ENCODE measurements at regions of chr4 and their contacts with region 1.

Region 1: GRCh38 chr4:163544407-163545038 is 50.0 kb downstream of the TMA16 start:
- DNase-seq: no peak
- ATAC-seq: peak; percentile 95
- H3K4me3 ChIP-seq: no peak overlapping the region
- H3K27ac ChIP-seq: no peak overlapping the region
- H3K4me1 ChIP-seq: no peaks in the 10 kb centered on the region
- H3K27me3 ChIP-seq: no peaks in the 10 kb centered on the region
- CTCF ChIP-seq: peak; percentile 92 to 93 (median 92)
- EP300 ChIP-seq: no peak
- POLR2A ChIP-seq: no peak
- RAD21 ChIP-seq: peak; percentile 84

Region 2: GRCh38 chr4:162497564-162498167 is 1046.9 kb before region 1 on chr4:
- CTCF ChIA-PET with region 1: interaction called, 25 read pairs
- POLR2A ChIA-PET with region 1: no interaction called
- RAD21 ChIA-PET with region 1: no interaction called
- SMC1A ChIA-PET with region 1: interaction called, 5 read pairs
- in situ Hi-C with region 1: loop called (anchors 10 kb)
- intact Hi-C with region 1: loop called (anchors 2 kb)
- DNase-seq: no peak
- ATAC-seq: peak; percentile 85
- H3K4me3 ChIP-seq: no peak overlapping the region
- H3K27ac ChIP-seq: no peak overlapping the region
- H3K4me1 ChIP-seq: no peaks in the 10 kb centered on the region
- H3K27me3 ChIP-seq: no peaks in the 10 kb centered on the region
- CTCF ChIP-seq: peak; percentile 60 to 73 (median 68)
- EP300 ChIP-seq: no peak
- POLR2A ChIP-seq: no peak
- RAD21 ChIP-seq: peak; percentile 97

Region 3: GRCh38 chr4:163332500-163333406 is 211.8 kb before region 1 on chr4 and contains the start of gene NPY1R:
- CTCF ChIA-PET with region 1: no interaction called
- POLR2A ChIA-PET with region 1: no interaction called
- RAD21 ChIA-PET with region 1: no interaction called
- SMC1A ChIA-PET with region 1: no interaction called
- in situ Hi-C with region 1: loop called (anchors 5 kb)
- intact Hi-C with region 1: no loop called
- DNase-seq: peak; percentile 1
- ATAC-seq: peak; percentile 90
- H3K4me3 ChIP-seq: peak within 1 kb of the TSS; percentile 59
- H3K27ac ChIP-seq: no peak within 1 kb of the TSS
- H3K4me1 ChIP-seq: no peaks in the 10 kb centered on the region
- H3K27me3 ChIP-seq: peaks cover 5 to 11% of the 10 kb centered on the region in 2 experiments
- CTCF ChIP-seq: peak; percentile 55 to 61 (median 57)
- EP300 ChIP-seq: no peak
- POLR2A ChIP-seq: no peak
- RAD21 ChIP-seq: peak; percentile 70
- polyA plus RNA-seq, gene NPY1R: not detected

Region 4: GRCh38 chr4:163484906-163485305 is 59.6 kb before region 1 on chr4:
- CTCF ChIA-PET with region 1: interaction called, 164 read pairs
- POLR2A ChIA-PET with region 1: no interaction called
- RAD21 ChIA-PET with region 1: interaction called, 26 read pairs
- SMC1A ChIA-PET with region 1: interaction called, 59 read pairs
- in situ Hi-C with region 1: loop called (anchors 10 kb)
- intact Hi-C with region 1: loop called (anchors 1 kb)
- DNase-seq: no peak
- ATAC-seq: peak; percentile 87
- H3K4me3 ChIP-seq: no peak overlapping the region
- H3K27ac ChIP-seq: no peak overlapping the region
- H3K4me1 ChIP-seq: peaks cover 12% of the 10 kb centered on the region; the same call in 1 of the 2 replicates
- H3K27me3 ChIP-seq: no peaks in the 10 kb centered on the region
- CTCF ChIP-seq: peak; percentile 55 to 73 (median 59); a peak in 5 of 6 replicates
- EP300 ChIP-seq: no peak
- POLR2A ChIP-seq: no peak
- RAD21 ChIP-seq: peak; percentile 91

Region 5: GRCh38 chr4:163527172-163527571 is 17.4 kb before region 1 on chr4:
- CTCF ChIA-PET with region 1: interaction called, 10 read pairs
- POLR2A ChIA-PET with region 1: no interaction called
- RAD21 ChIA-PET with region 1: interaction called, 5 read pairs
- SMC1A ChIA-PET with region 1: interaction called, 6 read pairs
- in situ Hi-C with region 1: no loop called
- intact Hi-C with region 1: no loop called
- DNase-seq: no peak
- ATAC-seq: no peak
- H3K4me3 ChIP-seq: no peak overlapping the region
- H3K27ac ChIP-seq: no peak overlapping the region
- H3K4me1 ChIP-seq: no peaks in the 10 kb centered on the region
- H3K27me3 ChIP-seq: no peaks in the 10 kb centered on the region
- CTCF ChIP-seq: no peak
- EP300 ChIP-seq: no peak
- POLR2A ChIP-seq: no peak
- RAD21 ChIP-seq: no peak

Region 6: GRCh38 chr4:163587867-163588266 is 43.3 kb after region 1 on chr4:
- CTCF ChIA-PET with region 1: interaction called, 23 read pairs
- POLR2A ChIA-PET with region 1: no interaction called
- RAD21 ChIA-PET with region 1: interaction called, 8 read pairs
- SMC1A ChIA-PET with region 1: no interaction called
- in situ Hi-C with region 1: no loop called
- intact Hi-C with region 1: no loop called
- DNase-seq: peak; percentile 73
- ATAC-seq: peak; percentile 78
- H3K4me3 ChIP-seq: no peak overlapping the region
- H3K27ac ChIP-seq: peak overlapping the region; percentile 25; the same call in 1 of the 2 replicates
- H3K4me1 ChIP-seq: peaks cover 33% of the 10 kb centered on the region
- H3K27me3 ChIP-seq: no peaks in the 10 kb centered on the region
- CTCF ChIP-seq: peak; percentile 28 to 62 (median 46); a peak in 5 of 6 replicates
- EP300 ChIP-seq: peak; percentile 63 to 78; a peak in 3 of 4 replicates
- POLR2A ChIP-seq: no peak
- RAD21 ChIP-seq: peak; percentile 20; the same call in 1 of the 2 replicates

Region 7: DNA sequence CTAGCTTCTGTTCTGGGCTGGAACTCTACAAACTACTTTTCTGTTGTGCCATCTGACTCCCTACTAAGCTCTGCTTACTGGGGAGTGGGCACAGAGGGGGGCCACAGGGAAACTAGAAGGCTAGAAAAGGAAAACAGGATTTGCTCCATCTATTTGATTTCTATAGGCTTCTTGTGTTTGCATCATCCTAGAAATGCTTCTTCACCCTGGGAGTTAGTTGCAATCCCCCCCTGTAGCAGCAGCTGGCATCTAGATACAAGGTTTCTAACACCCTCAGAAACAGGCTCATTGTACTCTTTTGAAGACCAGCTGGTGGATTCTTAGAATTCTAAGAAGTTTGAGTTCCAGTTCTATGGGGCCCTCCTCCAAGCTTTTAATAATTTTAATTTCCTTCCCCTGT is 163.3 kb after region 1 on chr4:
- CTCF ChIA-PET with region 1: no interaction called
- POLR2A ChIA-PET with region 1: no interaction called
- RAD21 ChIA-PET with region 1: no interaction called
- SMC1A ChIA-PET with region 1: no interaction called
- in situ Hi-C with region 1: no loop called
- intact Hi-C with region 1: no loop called
- DNase-seq: no peak
- ATAC-seq: no peak
- H3K4me3 ChIP-seq: no peak overlapping the region
- H3K27ac ChIP-seq: no peak overlapping the region
- H3K4me1 ChIP-seq: no peaks in the 10 kb centered on the region
- H3K27me3 ChIP-seq: no peaks in the 10 kb centered on the region
- CTCF ChIP-seq: no peak
- EP300 ChIP-seq: no peak
- POLR2A ChIP-seq: no peak
- RAD21 ChIP-seq: no peak

Region 8: GRCh38 chr4:163744861-163745260 is 200.3 kb after region 1 on chr4:
- CTCF ChIA-PET with region 1: interaction called, 134 read pairs
- POLR2A ChIA-PET with region 1: no interaction called
- RAD21 ChIA-PET with region 1: interaction called, 9 read pairs
- SMC1A ChIA-PET with region 1: interaction called, 14 read pairs
- in situ Hi-C with region 1: no loop called
- intact Hi-C with region 1: no loop called
- DNase-seq: peak; percentile 57
- ATAC-seq: peak; percentile 94
- H3K4me3 ChIP-seq: 0 out of 2 replicates have a peak overlapping the region, but pooled peaks have one; percentile 5
- H3K27ac ChIP-seq: peak overlapping the region; percentile 57
- H3K4me1 ChIP-seq: peaks cover 10% of the 10 kb centered on the region
- H3K27me3 ChIP-seq: no peaks in the 10 kb centered on the region
- CTCF ChIP-seq: no peak
- EP300 ChIP-seq: peak; percentile 22 to 58; a peak in 2 of 4 replicates
- POLR2A ChIP-seq: no peak
- RAD21 ChIP-seq: no peak